Caco-2 (cell line): ENCODE measurements at regions of chr1 and their contacts with region 1.

Region 1: DNA sequence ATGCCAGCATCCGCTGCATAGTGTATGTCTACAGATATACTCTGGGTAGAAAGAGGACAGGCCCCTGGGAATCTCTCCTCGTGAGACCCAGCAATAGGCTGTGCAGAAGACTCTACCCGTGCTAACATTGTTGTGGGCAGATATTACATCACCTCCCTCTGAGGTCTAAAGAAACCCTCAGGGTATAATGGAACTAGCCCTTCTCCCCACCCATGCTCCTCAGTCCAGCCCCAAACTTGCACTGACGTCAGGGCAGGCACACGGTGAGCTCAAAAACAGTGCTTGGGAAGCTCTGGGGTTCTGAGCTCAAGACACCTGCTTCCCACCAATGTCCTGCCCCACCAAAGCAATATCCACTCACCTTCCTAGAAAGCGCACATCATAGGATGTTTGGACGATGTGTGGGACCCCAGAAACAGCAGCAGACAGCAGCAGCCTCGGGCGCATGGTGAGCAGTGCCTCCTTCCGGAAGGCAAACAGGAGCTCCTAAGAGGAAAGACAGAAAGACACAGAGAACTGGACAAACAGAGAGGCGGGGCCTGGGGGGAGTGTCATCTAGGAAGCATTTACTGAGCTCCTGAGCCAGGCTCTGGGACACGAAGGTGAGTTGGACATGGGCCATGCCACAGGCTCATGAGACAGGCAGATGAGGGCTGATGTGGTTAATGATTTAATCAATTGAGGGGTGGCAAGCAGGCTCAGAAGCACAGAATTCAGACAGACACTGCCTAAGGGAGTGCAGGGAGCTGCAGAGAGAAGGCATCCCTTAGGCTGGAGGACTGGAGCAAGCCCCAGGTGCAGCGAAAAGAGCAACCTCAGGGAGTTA is 4.8 kb downstream of the OVGP1 start:
- DNase-seq: peak in 1 of 2 experiments; percentile 25
- H3K4me3 ChIP-seq: no peak overlapping the region
- H3K4me3 Mint-ChIP-seq: no peak overlapping the region
- H3K27ac Mint-ChIP-seq: no peak overlapping the region
- H3K4me1 ChIP-seq: peaks cover 5% of the 10 kb centered on the region; the same call in 1 of the 2 replicates
- H3K4me1 Mint-ChIP-seq: peaks cover 24% of the 10 kb centered on the region
- H3K27me3 ChIP-seq: no peaks in the 10 kb centered on the region
- H3K27me3 Mint-ChIP-seq: no peaks in the 10 kb centered on the region
- CTCF ChIP-seq: no peak

Region 2: GRCh38 chr1:111497592-111497991 is 74.8 kb after region 1 on chr1:
- CTCF ChIA-PET with region 1: no interaction called
- POLR2A ChIA-PET with region 1: no interaction called
- intact Hi-C with region 1: no loop called
- DNase-seq: no peak
- H3K4me3 ChIP-seq: no peak overlapping the region
- H3K4me3 Mint-ChIP-seq: no peak overlapping the region
- H3K27ac Mint-ChIP-seq: no peak overlapping the region
- H3K4me1 ChIP-seq: no peaks in the 10 kb centered on the region
- H3K4me1 Mint-ChIP-seq: no peaks in the 10 kb centered on the region
- H3K27me3 ChIP-seq: no peaks in the 10 kb centered on the region
- H3K27me3 Mint-ChIP-seq: no peaks in the 10 kb centered on the region
- CTCF ChIP-seq: no peak

Region 3: DNA sequence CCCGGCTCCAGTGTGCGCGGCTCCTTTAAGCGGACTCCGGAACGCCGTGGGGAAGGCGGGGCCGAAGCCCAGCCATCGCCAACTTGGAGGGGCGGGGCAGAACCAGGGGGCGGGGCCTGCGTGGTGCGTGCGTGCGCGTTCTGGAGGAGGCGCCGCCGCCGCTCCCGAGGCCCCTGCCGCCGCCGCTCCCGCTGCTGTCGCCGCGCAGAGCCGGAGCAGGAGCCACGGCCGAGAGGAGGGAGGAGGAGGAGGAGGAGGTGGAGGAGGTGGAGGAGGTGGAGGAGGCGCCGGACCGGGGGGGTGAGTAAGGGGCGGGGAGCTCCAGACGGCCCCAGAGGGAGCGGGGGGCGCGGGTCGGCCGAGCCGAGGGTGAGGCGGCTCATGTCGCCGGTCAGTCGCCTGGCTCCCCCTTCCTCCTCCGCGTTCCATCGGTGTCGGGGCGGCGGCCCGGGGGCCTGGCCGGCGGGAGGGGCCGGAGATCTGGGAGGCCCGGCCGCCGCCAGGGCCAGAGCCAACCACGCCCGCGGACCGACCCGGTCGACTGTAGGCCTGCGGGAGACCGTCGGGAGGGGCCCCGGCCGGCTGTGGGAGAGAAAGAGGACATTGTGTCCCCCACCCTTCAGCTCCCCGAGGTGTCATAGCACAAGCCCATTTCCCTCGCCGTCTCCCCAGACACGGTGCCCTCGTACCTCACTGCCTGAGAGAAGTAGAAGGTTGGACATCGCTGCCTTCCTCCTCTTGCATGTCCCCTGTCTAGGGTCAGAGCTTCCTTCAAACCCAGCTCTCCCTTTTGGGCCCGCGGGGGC is 197.1 kb after region 1 on chr1 and contains the start of gene RAP1A:
- CTCF ChIA-PET with region 1: interaction called, 10 read pairs
- POLR2A ChIA-PET with region 1: no interaction called
- intact Hi-C with region 1: no loop called
- DNase-seq: peak; percentile 90 to 91
- H3K4me3 ChIP-seq: peak within 1 kb of the TSS; percentile 73
- H3K4me3 Mint-ChIP-seq: peak within 1 kb of the TSS; percentile 97
- H3K27ac Mint-ChIP-seq: peak within 1 kb of the TSS; percentile 70
- H3K4me1 ChIP-seq: peaks cover 15% of the 10 kb centered on the region
- H3K4me1 Mint-ChIP-seq: peaks cover 27% of the 10 kb centered on the region
- H3K27me3 ChIP-seq: no peaks in the 10 kb centered on the region
- H3K27me3 Mint-ChIP-seq: no peaks in the 10 kb centered on the region
- CTCF ChIP-seq: no peak
- total RNA-seq, gene RAP1A: 60.1 and 64.1 TPM in 2 replicates